Heart left ventricle (tissue), 16 donors: ENCODE measurements at regions of chr6 and their contacts with region 1.

Region 1: GRCh38 chr6:41787219-41787917 is at the start of gene TOMM6:
- DNase-seq: peak; percentile 96 to 98 (median 97)
- ATAC-seq: peak; percentile 85 to 93 (median 86)
- H3K4me3 ChIP-seq: peak within 1 kb of the TSS; percentile 43 to 99 (median 88)
- H3K27ac ChIP-seq: peak within 1 kb of the TSS; percentile 83 to 99 (median 94)
- H3K4me1 ChIP-seq: peaks cover 12 to 56% (median 34%) of the 10 kb centered on the region in 12 donors
- H3K27me3 ChIP-seq: no peaks in the 10 kb centered on the region
- CTCF ChIP-seq: peak; percentile 77 to 97 (median 90)
- POLR2A ChIP-seq: peak in 1 of 2 donors; percentile 82
- total RNA-seq, gene TOMM6: 158 to 225 (median 182) TPM

Region 2: GRCh38 chr6:41379306-41379705 is 408.1 kb before region 1 on chr6:
- intact Hi-C with region 1: no loop called
- DNase-seq: no peak
- ATAC-seq: no peak
- H3K4me3 ChIP-seq: no peak overlapping the region
- H3K27ac ChIP-seq: no peak overlapping the region
- H3K4me1 ChIP-seq: peaks cover 0 to 16% (median 8%) of the 10 kb centered on the region in 12 donors
- H3K27me3 ChIP-seq: peaks cover 12 to 70% (median 15%) of the 10 kb centered on the region in 9 donors
- CTCF ChIP-seq: no peak
- POLR2A ChIP-seq: no peak

Region 3: DNA sequence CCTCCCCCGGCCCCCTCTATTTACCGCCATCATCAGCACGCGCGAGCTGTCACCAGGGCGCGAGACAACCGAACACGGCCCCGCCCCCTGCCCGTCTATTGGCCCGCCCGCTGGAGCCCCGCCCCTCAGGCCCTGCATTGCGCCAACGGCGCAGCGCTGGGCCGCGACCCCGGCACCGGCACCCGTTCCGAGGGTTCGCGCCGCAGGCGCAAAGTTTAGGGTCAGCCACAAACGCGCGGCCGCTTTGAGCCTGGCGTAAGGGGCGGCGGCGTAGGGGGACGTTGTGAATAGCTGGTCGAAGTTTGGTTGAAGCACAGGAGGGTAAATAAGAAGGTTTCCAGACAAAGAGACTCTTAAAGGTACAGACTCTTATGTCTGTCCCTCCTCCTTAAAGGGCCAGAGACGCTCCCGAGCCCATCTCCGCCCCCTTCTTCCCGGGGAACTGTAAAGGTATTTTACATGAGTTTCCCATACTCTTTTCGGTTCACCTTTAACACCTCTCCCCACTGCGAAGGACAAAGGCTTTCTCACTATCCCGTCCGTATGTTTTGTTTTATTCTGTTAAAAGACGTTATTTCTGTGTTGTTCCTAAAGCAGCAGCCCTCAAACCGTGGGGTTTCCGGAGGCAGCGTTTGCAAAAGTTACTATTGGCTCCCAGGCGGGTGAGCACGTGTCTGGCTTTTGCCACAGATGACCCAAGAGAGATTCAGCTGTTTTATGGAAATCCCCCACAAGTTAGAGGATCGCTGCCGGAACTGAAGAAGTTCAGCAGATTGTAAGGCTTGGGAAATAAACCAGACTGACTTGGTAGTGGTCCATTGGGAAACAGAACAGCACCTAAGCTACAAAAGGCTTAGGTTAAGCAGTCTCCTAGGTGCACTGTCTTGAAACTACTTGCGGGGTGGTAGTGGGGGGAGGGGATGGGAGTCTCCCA is 108.2 kb after region 1 on chr6 and contains the start of gene USP49:
- intact Hi-C with region 1: loop called in 2 of 10 experiments (anchors 5 to 10 kb)
- DNase-seq: peak; percentile 88 to 92 (median 91)
- ATAC-seq: peak; percentile 92 to 99 (median 98)
- H3K4me3 ChIP-seq: peak within 1 kb of the TSS; percentile 59 to 94 (median 79)
- H3K27ac ChIP-seq: peak within 1 kb of the TSS in 11 of 12 donors; percentile 60 to 92 (median 74)
- H3K4me1 ChIP-seq: peaks cover 0 to 31% (median 12%) of the 10 kb centered on the region in 12 donors
- H3K27me3 ChIP-seq: no peaks in the 10 kb centered on the region
- CTCF ChIP-seq: no peak
- POLR2A ChIP-seq: no peak
- total RNA-seq, gene USP49: 1.2 to 3.4 (median 2.4) TPM

Region 4: DNA sequence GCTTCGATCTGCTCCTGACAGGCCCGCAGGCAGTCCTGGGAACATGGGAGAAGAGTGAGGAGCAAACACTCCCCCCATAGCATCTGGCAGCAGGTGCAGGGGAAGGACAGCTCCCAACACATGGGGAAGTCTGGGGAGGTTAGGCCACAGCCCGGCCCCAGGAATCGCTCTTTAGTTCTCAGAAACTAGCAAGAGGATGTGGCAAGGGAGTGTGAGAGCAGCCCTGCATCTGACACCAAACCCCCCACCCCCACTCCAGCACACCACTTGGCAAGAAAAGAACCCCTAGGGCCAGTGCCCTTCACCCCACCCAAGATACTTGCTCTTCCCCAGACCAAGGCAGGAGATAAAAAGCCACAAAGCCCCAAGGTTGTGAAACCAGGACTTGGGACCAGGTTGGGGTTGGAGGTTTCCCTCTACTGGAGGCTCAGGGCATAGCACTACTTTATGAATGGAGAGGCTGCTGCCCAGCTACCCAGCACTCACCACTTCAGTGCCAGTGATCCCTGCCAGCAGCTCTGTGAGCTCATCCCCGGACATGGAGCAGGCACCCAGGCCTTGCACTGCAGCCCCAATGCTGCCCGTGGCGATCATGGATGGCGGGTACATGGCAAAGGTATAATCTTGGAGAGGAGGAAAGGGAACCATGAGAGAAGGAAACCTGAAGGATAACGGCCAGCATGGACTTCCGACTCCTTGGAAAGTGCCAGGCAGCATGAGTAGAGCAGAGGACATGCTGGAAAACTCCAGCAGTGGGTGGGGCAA is 148.9 kb after region 1 on chr6:
- intact Hi-C with region 1: loop called in 8 of 10 experiments (anchors 5 kb)
- DNase-seq: peak; percentile 71 to 87 (median 76)
- ATAC-seq: peak; percentile 62 to 82 (median 72)
- H3K4me3 ChIP-seq: peak overlapping the region in 2 of 12 donors; percentile 9 to 93
- H3K27ac ChIP-seq: peak overlapping the region in 9 of 12 donors; percentile 46 to 95 (median 87)
- H3K4me1 ChIP-seq: peaks cover 7 to 65% (median 48%) of the 10 kb centered on the region in 12 donors
- H3K27me3 ChIP-seq: no peaks in the 10 kb centered on the region
- CTCF ChIP-seq: peak; percentile 67 to 86 (median 76)
- POLR2A ChIP-seq: no peak

Region 5: DNA sequence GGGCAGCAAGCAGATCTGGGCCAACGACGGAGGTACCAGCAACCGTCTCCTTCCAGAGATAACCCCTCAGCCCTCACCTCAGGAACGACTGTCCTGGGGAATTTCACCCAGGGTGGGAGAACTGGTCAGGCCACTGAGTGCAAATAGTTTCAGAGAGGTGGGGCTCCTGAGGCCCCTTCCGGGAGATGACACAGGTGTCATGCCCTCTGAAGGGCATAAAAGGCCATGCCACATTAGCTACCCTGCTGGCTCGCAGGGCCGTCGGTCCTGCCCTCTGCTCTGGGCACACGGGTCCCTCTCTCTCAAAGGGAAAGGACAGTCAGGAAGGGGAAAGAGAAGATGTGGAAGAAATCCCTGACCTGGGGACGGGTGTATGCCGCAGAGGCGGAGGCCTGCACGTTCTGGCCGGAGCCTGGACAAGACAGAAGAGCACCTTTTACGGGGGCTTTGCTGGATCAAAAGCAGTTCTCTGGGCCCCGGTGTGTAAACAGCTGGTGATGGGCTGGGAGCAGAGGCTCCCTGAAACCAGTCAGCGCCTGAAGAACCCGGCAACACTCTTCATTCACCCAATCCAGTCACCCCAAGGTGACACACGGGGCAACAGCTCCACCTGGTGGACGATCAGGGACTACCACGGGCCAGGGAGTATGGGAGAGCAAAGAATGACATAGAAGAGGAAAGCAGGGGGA is 256.6 kb after region 1 on chr6:
- intact Hi-C with region 1: loop called in 2 of 10 experiments (anchors 2 kb)
- DNase-seq: peak; percentile 87 to 92 (median 88)
- ATAC-seq: peak; percentile 52 to 80 (median 74)
- H3K4me3 ChIP-seq: peak overlapping the region in 4 of 12 donors; percentile 15 to 37 (median 20)
- H3K27ac ChIP-seq: peak overlapping the region in 10 of 12 donors; percentile 81 to 98 (median 94)
- H3K4me1 ChIP-seq: peaks cover 16 to 94% (median 59%) of the 10 kb centered on the region in 12 donors
- H3K27me3 ChIP-seq: no peaks in the 10 kb centered on the region
- CTCF ChIP-seq: peak; percentile 92 to 98 (median 97)
- POLR2A ChIP-seq: no peak

Region 6: DNA sequence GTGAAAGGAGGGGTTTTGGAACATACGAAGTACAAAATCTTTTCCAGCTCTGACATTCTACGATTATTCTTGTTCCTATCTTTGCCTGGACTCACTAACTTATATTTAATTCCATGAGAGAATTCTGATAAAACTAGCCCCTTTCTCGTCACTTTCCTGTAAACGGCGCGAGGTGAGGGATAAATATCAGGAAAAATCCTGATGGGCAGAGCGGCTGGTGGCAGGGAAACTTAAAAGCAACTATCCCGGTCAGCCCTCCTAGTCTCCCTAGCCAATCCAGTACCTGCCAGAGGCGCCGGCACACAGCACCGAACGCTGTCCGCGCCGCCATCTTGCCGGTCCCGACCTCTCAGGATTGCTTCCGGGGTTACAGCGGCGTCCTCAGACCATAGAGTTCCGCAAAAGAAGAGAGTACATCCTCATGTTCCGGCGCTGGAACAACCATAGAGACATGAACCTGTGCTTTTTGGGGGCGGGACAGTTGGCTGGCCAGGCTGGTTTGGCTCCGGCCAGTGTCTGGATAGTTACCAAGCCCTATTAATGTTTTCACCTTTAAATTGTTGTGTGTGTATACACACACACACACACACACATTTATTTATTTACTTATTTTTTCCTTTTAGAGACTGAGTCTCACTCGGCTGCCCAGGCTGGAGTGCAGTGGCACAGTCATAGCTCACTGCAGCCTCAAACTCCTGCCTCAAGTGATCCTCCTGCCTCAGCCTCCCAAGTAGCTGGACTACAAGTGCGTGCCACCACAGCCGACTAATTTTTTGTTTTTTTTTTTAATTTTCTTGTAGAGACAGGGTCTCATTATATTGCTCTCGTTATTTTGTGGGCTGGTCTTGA is 430.4 kb after region 1 on chr6 and contains the start of gene MRPS10:
- intact Hi-C with region 1: loop called in 3 of 10 experiments (anchors 5 to 10 kb)
- DNase-seq: peak; percentile 93 to 94 (median 93)
- ATAC-seq: peak; percentile 99 to 100 (median 100)
- H3K4me3 ChIP-seq: peak within 1 kb of the TSS; percentile 49 to 90 (median 80)
- H3K27ac ChIP-seq: peak within 1 kb of the TSS; percentile 53 to 87 (median 80)
- H3K4me1 ChIP-seq: peaks cover 0 to 23% (median 12%) of the 10 kb centered on the region in 12 donors
- H3K27me3 ChIP-seq: no peaks in the 10 kb centered on the region
- CTCF ChIP-seq: peak in 1 of 12 donors; percentile 22
- POLR2A ChIP-seq: peak in 1 of 2 donors; percentile 62
- total RNA-seq, gene MRPS10: 47.5 to 73.5 (median 57.3) TPM

Region 7: DNA sequence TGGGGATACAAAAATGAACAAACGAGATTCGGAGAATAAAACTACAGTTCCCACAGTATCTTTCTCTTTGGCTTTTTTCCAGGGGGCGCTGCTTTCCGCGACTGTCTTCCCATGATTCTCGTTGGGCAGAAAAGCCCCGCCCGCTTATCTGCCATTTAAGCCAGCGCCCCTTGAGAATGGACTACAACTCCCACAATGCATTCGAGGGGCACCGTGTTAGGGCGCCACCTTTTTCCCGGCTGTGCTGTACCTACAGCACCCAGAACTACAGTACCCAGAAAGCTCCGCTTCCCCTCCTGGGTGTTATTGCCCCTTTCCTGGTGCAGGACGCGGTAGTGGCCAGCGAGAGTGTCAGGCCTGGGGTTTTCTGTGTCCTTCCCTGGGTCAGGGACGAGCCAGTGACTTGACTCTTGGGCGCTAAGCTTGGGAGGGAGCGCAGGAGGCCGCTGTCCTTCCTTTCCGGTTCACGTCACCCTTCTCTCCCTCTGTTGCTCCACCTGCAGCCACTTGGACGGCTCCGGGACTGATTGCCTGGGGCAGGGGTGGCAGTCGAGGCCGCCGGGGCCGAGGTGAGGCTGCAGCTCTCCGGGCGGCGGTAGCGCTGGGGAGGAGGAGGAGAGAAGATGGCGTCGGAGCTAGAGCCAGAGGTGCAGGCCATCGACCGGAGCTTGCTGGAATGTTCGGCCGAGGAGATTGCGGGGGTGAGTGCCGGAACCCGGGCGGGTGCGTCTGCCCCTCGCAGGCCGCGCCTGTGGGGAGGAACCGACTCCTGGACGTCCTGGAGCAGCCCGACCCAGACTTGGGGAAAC is 776.5 kb after region 1 on chr6 and contains the start of gene UBR2:
- intact Hi-C with region 1: loop called in 1 of 10 experiments (anchors 10 kb)
- DNase-seq: peak; percentile 95 to 98 (median 98)
- ATAC-seq: peak; percentile 97 to 99 (median 98)
- H3K4me3 ChIP-seq: peak within 1 kb of the TSS; percentile 74 to 98 (median 81)
- H3K27ac ChIP-seq: peak within 1 kb of the TSS; percentile 91 to 99 (median 97)
- H3K4me1 ChIP-seq: peaks cover 0 to 37% (median 13%) of the 10 kb centered on the region in 12 donors
- H3K27me3 ChIP-seq: no peaks in the 10 kb centered on the region
- CTCF ChIP-seq: peak in 11 of 12 donors; percentile 1 to 59 (median 40)
- POLR2A ChIP-seq: peak; percentile 7 to 95
- total RNA-seq, gene UBR2: 27.3 to 35.9 (median 30.2) TPM